ENCODE measurements at regions of chr3 and their contacts with region 1.

Region 1: GRCh38 chr3:173846584-173846983 is 449.0 kb downstream of the NLGN1 start:
- DNase-seq: no peak
- ATAC-seq: no peak

Region 2: GRCh38 chr3:173814809-173815208 is 31.8 kb before region 1 on chr3:
- intact Hi-C with region 1: loop called (anchors 1 kb)
- DNase-seq: no peak
- ATAC-seq: no peak

Region 3: GRCh38 chr3:173891272-173892100 is 44.9 kb after region 1 on chr3:
- intact Hi-C with region 1: no loop called
- DNase-seq: no peak
- ATAC-seq: no peak